ENCODE measurements at regions of chr14 and their contacts with region 1.

Region 1: GRCh38 chr14:61837336-61838229 is 75.4 kb downstream of the SNAPC1 start:
- DNase-seq: no peak
- H3K4me3 ChIP-seq: no peak overlapping the region
- CTCF ChIP-seq: peak; percentile 88

Region 2: GRCh38 chr14:61296719-61297502 is 540.7 kb before region 1 on chr14:
- CTCF ChIA-PET with region 1: interaction called, 38 read pairs
- POLR2A ChIA-PET with region 1: no interaction called
- DNase-seq: peak; percentile 10
- H3K4me3 ChIP-seq: no peak overlapping the region
- CTCF ChIP-seq: peak; percentile 55

Region 3: DNA sequence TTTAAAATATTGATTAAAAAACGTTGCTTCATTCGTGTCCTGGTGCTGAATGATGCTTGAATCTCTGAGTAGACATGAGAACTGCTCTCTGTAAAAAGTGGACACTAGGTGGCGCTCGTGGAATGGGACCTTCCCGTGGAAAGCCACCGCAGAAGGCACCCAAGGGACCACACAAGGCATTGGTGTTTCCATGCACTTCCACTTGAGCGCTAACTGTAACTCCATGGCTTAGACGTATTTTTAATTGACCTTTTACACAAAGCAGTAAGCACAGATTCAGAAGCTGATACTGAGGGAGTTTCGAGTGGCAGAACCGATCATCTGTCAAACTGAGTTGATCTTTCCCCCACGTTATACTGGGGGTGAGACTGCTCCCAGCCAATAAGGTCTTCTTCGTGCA is 380.9 kb before region 1 on chr14:
- CTCF ChIA-PET with region 1: interaction called, 127 read pairs
- POLR2A ChIA-PET with region 1: interaction called, 3 read pairs
- DNase-seq: no peak
- H3K4me3 ChIP-seq: no peak overlapping the region
- CTCF ChIP-seq: peak; percentile 80

Region 4: GRCh38 chr14:61719344-61720293 is 118.0 kb before region 1 on chr14:
- CTCF ChIA-PET with region 1: interaction called, 12 read pairs
- POLR2A ChIA-PET with region 1: no interaction called
- DNase-seq: no peak
- H3K4me3 ChIP-seq: no peak overlapping the region
- CTCF ChIP-seq: no peak

Region 5: DNA sequence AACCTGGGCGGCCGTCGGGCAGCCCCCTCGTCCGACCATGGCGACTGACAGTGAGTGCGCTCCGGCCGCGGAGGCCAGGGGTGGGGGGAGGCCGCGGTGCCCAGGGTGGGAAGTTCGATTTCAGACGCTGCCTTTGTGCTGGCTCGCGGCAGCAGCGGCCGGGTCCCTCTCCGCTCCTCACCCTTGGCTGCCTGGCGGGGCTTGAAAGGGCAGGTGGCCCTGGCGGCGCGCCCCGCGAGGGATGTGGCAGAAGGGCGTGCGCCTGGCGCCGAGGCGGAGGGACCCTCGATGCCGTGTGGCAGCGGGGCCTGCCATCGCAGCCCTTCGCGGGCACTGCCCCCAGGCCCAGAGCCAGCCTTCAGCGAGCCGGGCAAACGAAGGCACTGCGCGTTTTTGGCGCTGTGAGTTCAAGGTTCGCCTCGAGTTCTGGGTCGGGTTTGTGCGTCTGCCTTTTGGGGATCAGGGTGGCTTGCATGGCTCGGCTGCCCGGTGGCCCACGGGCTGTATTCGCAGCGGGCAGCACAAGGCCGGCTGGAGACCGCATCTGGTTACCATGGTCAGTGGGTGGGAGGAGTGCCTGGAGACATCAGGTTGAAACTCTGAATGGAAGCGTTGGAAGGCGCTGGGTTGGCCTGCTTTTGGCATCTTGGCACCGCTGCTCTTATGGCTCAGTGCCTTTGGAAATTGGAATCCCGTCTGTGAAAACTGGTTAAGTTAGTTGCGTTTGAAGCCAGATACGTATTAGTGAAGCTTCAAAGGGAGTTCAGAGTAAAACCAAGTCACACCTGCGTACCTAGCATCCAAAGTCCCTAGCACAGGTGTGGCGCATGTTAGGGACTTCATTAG is 24.6 kb before region 1 on chr14:
- CTCF ChIA-PET with region 1: interaction called, 16 read pairs
- POLR2A ChIA-PET with region 1: no interaction called
- DNase-seq: no peak
- H3K4me3 ChIP-seq: peak overlapping the region; percentile 56
- CTCF ChIP-seq: no peak

Region 6: DNA sequence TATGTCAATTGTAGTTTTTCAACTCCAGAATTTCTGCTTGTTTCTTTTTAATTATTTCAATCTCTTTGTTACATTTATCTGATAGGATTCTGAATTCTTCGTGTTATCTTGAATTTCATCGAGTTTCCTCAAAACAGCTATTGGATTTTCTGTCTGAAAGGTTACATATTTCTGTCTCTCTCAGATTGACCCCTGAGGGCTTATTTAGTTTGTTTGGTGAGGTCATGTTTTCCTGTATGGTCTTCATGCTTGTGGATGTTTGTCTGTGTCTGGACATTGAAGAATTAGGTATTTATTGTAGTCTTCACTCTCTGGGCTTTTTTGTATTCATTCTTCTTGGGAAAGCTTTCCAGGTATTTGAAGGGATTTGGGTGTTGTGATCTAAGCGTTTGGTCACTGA is 10.3 kb after region 1 on chr14:
- CTCF ChIA-PET with region 1: interaction called, 32 read pairs
- POLR2A ChIA-PET with region 1: no interaction called
- DNase-seq: no peak
- H3K4me3 ChIP-seq: no peak overlapping the region
- CTCF ChIP-seq: no peak

Region 7: DNA sequence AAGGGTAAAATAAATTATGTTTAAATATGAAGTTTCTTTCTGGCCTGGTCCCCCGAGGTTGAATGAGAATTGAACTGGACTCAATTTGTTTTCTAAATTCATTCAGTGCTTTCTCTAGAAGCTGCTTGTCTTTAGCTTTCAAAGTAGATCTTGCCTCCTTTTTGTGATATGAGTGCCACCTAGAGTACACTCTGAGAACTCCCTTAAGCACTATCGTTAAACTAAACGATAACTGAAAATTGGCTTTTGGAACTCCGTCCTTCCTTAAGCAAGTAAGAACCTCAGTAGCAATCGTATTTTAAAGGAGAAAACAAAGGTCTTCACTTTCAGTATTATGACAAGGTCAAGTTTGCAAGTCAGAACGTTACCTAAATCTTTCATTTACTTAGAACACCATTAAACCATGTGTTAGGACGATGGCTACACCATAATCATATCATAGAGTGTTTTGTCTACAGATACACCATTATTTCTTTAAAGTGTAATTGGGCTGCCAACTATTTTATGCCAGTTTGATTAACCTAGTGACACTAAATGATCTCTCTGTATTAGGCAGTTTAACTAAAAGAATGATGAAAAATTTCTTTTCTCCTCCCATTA is 289.4 kb after region 1 on chr14:
- CTCF ChIA-PET with region 1: interaction called, 18 read pairs
- POLR2A ChIA-PET with region 1: no interaction called
- DNase-seq: peak; percentile 49
- H3K4me3 ChIP-seq: no peak overlapping the region
- CTCF ChIP-seq: peak; percentile 59

Measured in AG04449 (cell line).